ENCODE measurements at regions of chr16 and their contacts with region 1.

Region 1: DNA sequence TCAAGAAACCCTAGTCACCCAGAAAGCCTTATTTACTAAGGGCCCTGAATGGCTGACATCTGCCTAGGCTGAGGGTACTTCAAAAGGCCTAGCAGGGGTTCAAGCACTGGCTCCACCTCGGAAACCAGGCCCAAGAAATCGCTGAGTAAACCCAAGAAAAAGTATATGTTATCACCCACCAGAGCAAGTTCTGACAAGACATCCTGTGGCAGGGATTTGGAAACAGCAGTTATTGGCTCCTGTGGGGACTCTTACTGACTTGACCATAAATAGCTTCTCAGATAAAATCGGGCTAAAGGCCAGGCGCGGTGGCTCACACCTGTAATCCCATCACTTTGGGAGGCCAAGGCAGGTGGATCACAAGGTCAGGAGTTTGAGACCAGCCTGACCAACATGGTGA is 12.2 kb downstream of the ATP6V0D1 start:
- DNase-seq: no peak
- H3K4me3 ChIP-seq: no peak overlapping the region
- H3K27ac ChIP-seq: no peak overlapping the region
- H3K4me1 ChIP-seq: peaks cover 32 to 58% of the 10 kb centered on the region in 2 donors
- H3K27me3 ChIP-seq: no peaks in the 10 kb centered on the region
- CTCF ChIP-seq: no peak
- POLR2A ChIP-seq: no peak

Region 2: GRCh38 chr16:67311607-67312488 is 156.9 kb before region 1 on chr16:
- intact Hi-C with region 1: no loop called
- DNase-seq: no peak
- H3K4me3 ChIP-seq: no peak overlapping the region
- H3K27ac ChIP-seq: no peak overlapping the region
- H3K4me1 ChIP-seq: peaks cover 0 to 3% of the 10 kb centered on the region in 2 donors
- H3K27me3 ChIP-seq: no peaks in the 10 kb centered on the region
- CTCF ChIP-seq: no peak
- POLR2A ChIP-seq: no peak

Region 3: DNA sequence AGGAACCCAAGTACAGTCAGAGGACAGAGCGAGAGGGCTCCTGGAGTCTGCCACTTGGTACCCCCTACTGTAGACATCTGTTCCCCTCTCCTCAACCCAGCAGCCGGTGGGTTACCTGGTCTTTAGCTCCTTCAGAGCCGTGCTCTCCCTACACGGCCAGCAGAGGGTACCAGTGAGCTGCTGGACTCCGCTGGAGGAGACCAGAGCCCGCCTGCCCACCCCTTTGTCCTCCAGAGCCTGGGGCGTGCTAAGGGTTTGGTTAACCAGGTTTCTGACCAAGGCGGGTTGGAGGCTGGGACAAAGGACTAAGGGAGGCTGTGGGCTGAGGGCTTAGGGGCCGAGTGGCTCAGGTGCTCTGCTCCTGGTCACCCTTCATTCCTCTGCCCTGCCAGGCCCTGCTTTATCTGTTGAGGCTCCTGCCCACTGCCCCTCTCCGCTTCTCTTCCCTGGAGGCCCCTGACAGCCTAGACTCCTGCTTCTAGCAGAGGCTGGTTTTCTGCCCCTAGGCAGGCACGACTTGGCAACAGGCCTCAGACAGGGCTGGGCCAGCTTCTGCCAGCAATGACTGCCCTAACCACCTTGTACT is 40.5 kb before region 1 on chr16:
- intact Hi-C with region 1: loop called (anchors 5 kb)
- DNase-seq: peak; percentile 81 to 87
- H3K4me3 ChIP-seq: no peak overlapping the region
- H3K27ac ChIP-seq: no peak overlapping the region
- H3K4me1 ChIP-seq: peaks cover 50 to 77% of the 10 kb centered on the region in 2 donors
- H3K27me3 ChIP-seq: no peaks in the 10 kb centered on the region
- CTCF ChIP-seq: peak; percentile 52 to 95 (median 92)
- POLR2A ChIP-seq: no peak

Measured in thyroid gland (tissue), 4 donors.